ENCODE measurements at regions of chr17 and their contacts with region 1.

Region 1: DNA sequence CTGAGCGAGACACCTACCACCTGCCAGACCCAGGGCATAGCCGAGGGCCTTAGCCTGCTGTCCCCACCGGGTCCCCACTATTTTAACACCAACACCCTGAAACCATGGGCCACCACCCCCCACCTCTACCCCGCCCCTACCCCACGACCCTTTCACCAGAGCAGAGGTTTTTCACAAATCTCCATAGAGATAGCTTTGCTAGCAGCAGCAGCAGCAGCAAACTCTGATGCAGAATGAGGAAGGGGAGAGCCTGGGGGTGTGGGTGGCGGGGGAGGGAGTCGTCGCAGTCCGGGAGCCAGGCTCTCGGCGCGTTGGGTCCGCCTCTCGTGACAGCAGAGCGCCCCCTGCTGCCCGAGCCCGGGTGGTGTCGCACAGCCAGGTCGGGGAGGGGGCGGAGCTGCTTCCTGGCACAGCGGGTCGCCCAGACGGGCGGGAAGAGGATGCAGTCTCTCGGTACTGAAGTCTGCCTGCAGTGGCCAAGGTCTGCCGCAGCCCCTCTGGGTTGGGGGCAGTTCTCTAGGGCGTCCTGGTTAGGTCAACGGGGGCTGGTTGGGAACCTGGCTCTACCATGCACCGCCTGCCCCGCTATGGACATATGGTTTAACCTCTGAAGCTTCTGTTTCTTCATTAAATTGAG is 38.1 kb upstream of the CCDC182 start:
- DNase-seq: peak; percentile 87
- H3K4me3 Mint-ChIP-seq: no peak overlapping the region
- H3K27ac Mint-ChIP-seq: no peak overlapping the region
- H3K4me1 Mint-ChIP-seq: peaks cover 4% of the 10 kb centered on the region
- H3K27me3 Mint-ChIP-seq: peaks cover 42% of the 10 kb centered on the region

Region 2: DNA sequence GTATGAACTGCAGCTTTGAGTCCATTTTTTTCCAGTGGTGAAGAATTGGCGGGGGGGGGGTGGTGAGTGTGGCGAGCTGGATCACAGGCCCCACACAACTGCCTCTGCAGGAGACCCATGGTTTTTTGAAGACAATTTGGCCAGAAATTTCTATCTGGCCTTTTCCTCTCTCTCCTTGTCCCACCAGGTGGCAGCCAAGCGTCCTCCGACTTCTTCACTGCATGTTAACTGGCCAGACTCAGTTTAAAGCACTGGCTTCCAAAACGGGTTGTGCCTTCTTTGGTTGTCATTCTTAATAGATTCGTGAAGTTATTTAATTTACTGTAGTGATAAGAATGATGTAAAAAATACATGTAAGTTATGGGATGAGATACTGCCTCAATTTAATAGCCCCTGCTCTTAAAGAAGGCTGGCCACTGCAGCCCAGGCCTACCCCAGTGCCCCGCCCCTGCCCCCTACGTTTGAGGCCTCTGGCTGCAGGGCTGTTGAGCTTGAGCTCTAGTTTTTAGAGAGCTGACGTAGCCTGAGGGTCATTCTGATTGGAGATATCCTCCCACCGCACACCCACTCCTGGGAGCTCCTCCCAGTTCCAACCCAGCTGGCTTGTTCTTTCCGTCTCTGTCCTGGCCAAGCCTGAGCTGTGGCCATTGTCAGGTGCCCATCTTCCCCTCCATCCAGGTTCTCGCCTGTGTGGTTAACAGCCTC is 661.7 kb before region 1 on chr17:
- CTCF ChIA-PET with region 1: interaction called, 10 read pairs
- DNase-seq: peak; percentile 25
- H3K4me3 Mint-ChIP-seq: no peak overlapping the region
- H3K27ac Mint-ChIP-seq: no peak overlapping the region
- H3K4me1 Mint-ChIP-seq: peaks cover 8% of the 10 kb centered on the region
- H3K27me3 Mint-ChIP-seq: no peaks in the 10 kb centered on the region

Region 3: DNA sequence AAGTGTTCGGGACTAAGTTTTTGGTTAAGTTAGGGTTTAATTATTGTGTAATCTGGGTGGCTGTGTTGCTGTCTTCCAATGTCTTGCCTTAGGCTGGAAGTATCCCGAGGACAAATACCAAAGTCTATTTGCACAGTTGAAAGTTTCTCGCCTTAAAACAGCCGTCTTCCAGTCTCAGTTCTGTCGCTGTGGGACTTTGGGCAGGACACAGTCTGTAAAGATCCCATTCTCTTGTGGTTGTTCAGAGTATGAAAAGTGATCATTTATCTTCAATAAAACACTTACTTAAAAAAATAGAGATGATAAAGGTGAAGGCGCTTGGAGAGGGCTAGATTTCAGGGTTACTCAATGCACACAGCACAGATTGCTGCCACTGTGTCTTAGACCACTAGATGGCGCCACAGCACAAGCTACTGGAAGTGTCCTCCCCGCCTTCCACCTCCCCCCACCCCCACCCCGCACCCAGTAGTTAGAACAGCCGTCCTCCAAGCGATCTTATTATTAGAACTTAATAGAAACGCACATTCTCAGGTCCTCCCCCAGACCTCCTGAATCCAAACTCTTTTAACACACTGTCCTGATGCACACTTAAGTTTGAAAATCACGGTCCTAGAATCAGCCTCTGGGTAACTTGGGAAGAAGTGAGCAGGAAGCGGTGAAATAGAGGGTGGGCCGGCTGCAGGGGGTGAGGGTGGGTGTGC is 652.3 kb before region 1 on chr17:
- CTCF ChIA-PET with region 1: interaction called, 18 read pairs
- DNase-seq: peak; percentile 89
- H3K4me3 Mint-ChIP-seq: no peak overlapping the region
- H3K27ac Mint-ChIP-seq: no peak overlapping the region
- H3K4me1 Mint-ChIP-seq: peaks cover 15% of the 10 kb centered on the region
- H3K27me3 Mint-ChIP-seq: peaks cover 2% of the 10 kb centered on the region

Region 4: GRCh38 chr17:57671667-57672632 is 111.3 kb before region 1 on chr17:
- CTCF ChIA-PET with region 1: interaction called, 12 read pairs
- DNase-seq: peak; percentile 79
- H3K4me3 Mint-ChIP-seq: peak overlapping the region; percentile 10
- H3K27ac Mint-ChIP-seq: peak overlapping the region; percentile 88
- H3K4me1 Mint-ChIP-seq: peaks cover 28% of the 10 kb centered on the region
- H3K27me3 Mint-ChIP-seq: no peaks in the 10 kb centered on the region

Region 5: GRCh38 chr17:57685505-57686132 is 97.6 kb before region 1 on chr17:
- CTCF ChIA-PET with region 1: no interaction called
- DNase-seq: no peak
- H3K4me3 Mint-ChIP-seq: no peak overlapping the region
- H3K27ac Mint-ChIP-seq: no peak overlapping the region
- H3K4me1 Mint-ChIP-seq: no peaks in the 10 kb centered on the region
- H3K27me3 Mint-ChIP-seq: peaks cover 10% of the 10 kb centered on the region

Region 6: GRCh38 chr17:57735706-57736105 is 47.5 kb before region 1 on chr17:
- CTCF ChIA-PET with region 1: no interaction called
- DNase-seq: peak; percentile 31
- H3K4me3 Mint-ChIP-seq: no peak overlapping the region
- H3K27ac Mint-ChIP-seq: no peak overlapping the region
- H3K4me1 Mint-ChIP-seq: peaks cover 5% of the 10 kb centered on the region
- H3K27me3 Mint-ChIP-seq: peaks cover 39% of the 10 kb centered on the region

Region 7: GRCh38 chr17:57766318-57766943 is 16.8 kb before region 1 on chr17:
- CTCF ChIA-PET with region 1: interaction called, 19 read pairs
- DNase-seq: no peak
- H3K4me3 Mint-ChIP-seq: no peak overlapping the region
- H3K27ac Mint-ChIP-seq: no peak overlapping the region
- H3K4me1 Mint-ChIP-seq: no peaks in the 10 kb centered on the region
- H3K27me3 Mint-ChIP-seq: peaks cover 44% of the 10 kb centered on the region

Region 8: DNA sequence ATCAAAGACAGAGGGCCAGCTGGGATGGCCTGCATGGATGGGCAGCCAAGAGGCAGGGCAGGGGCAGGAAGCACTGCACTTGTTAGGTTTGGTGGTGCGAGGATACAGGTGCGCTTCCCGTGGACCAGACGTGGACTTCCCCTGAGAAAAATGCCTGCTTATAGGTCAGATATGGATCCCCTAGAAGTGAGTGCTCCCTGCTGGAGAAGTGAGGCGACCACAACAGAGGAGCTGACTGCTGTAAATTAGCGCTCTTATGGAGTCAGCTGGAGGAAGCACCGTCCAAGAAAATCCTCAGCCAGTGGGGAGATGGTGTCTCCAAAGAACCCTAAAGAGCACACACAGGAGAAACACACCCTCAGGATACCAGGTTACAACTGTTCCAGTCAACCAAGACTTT is 10.4 kb before region 1 on chr17:
- CTCF ChIA-PET with region 1: interaction called, 19 read pairs
- DNase-seq: no peak
- H3K4me3 Mint-ChIP-seq: no peak overlapping the region
- H3K27ac Mint-ChIP-seq: no peak overlapping the region
- H3K4me1 Mint-ChIP-seq: no peaks in the 10 kb centered on the region
- H3K27me3 Mint-ChIP-seq: peaks cover 72% of the 10 kb centered on the region

Region 9: GRCh38 chr17:57833179-57833939 is 50.1 kb after region 1 on chr17:
- CTCF ChIA-PET with region 1: interaction called, 16 read pairs
- DNase-seq: peak; percentile 79
- H3K4me3 Mint-ChIP-seq: no peak overlapping the region
- H3K27ac Mint-ChIP-seq: no peak overlapping the region
- H3K4me1 Mint-ChIP-seq: peaks cover 2% of the 10 kb centered on the region
- H3K27me3 Mint-ChIP-seq: peaks cover 6% of the 10 kb centered on the region

Region 10: GRCh38 chr17:57853695-57854094 is 70.5 kb after region 1 on chr17:
- CTCF ChIA-PET with region 1: no interaction called
- DNase-seq: no peak
- H3K4me3 Mint-ChIP-seq: no peak overlapping the region
- H3K27ac Mint-ChIP-seq: no peak overlapping the region
- H3K4me1 Mint-ChIP-seq: peaks cover 32% of the 10 kb centered on the region
- H3K27me3 Mint-ChIP-seq: peaks cover 17% of the 10 kb centered on the region